ENCODE measurements at regions of chr21 and their contacts with region 1.

Region 1: GRCh38 chr21:46635324-46636172 is at the start of gene PRMT2:
- DNase-seq: peak; percentile 94 to 100 (median 98)
- ATAC-seq: peak; percentile 83
- H3K4me3 ChIP-seq: peak within 1 kb of the TSS; percentile 97
- H3K4me3 Mint-ChIP-seq: peak within 1 kb of the TSS; percentile 94
- H3K27ac ChIP-seq: peak within 1 kb of the TSS; percentile 95 to 97
- H3K27ac Mint-ChIP-seq: peak within 1 kb of the TSS; percentile 91
- H3K4me1 ChIP-seq: peaks cover 59% of the 10 kb centered on the region
- H3K4me1 Mint-ChIP-seq: peaks cover 80% of the 10 kb centered on the region
- H3K27me3 ChIP-seq: no peaks in the 10 kb centered on the region
- H3K27me3 Mint-ChIP-seq: no peaks in the 10 kb centered on the region
- CTCF ChIP-seq: no peak
- total RNA-seq, gene PRMT2: 78.8 to 78.9 TPM

Region 2: DNA sequence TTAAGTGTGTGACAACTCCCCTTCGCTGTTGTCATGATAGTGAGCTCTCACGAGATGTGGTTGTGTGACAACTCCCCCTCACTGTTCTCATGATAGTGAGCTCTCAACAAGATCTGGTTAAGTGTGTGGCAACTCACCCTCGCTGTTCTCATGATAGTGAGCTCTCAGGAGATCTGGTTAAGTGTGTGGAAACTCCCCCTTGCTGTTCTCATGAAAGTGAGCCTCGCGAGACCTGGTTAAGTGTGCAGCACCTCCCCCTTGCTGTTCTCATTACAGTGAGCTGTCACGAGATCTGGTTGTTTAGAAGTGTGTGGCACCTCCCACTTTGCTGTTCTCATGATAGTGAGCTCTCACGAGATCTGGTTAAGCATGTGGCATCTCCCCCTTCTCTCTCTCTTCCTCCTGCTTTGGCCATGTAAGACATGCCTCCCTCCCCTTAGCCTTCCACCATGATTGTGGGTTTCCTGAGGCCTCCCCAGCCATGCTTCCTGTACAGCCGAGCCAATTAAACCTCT is 381.9 kb before region 1 on chr21:
- CTCF ChIA-PET with region 1: no interaction called
- POLR2A ChIA-PET with region 1: no interaction called
- intact Hi-C with region 1: no loop called
- DNase-seq: peak in 6 of 9 experiments; percentile 9 to 84 (median 48)
- ATAC-seq: peak; percentile 92
- H3K4me3 ChIP-seq: no peak overlapping the region
- H3K4me3 Mint-ChIP-seq: no peak overlapping the region
- H3K27ac ChIP-seq: peak overlapping the region in 1 of 2 experiments; percentile 71
- H3K27ac Mint-ChIP-seq: peak overlapping the region; percentile 84
- H3K4me1 ChIP-seq: peaks cover 21% of the 10 kb centered on the region
- H3K4me1 Mint-ChIP-seq: peaks cover 35% of the 10 kb centered on the region
- H3K27me3 ChIP-seq: no peaks in the 10 kb centered on the region
- H3K27me3 Mint-ChIP-seq: no peaks in the 10 kb centered on the region
- CTCF ChIP-seq: no peak

Region 3: DNA sequence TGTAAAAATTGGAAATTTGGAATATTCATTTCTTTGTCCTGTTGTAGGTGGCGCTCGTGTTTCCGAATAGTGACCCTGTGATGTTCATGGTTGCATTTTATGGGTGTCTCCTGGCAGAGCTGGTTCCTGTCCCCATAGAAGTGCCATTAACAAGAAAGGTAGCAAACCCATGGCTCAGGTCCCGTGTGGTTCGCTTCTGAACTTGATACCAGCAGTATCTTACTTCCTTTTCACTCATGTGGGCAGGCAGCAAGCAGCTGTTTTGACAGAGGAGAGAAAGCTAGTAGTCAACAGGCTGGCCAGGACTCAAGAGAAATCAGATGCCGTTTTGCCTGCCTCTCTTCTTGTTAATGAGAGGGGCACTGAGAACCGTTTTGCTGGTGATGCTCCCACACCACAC is 103.5 kb before region 1 on chr21:
- CTCF ChIA-PET with region 1: interaction called, 7 read pairs
- POLR2A ChIA-PET with region 1: interaction called, 31 read pairs
- intact Hi-C with region 1: loop called in 1 of 2 experiments (anchors 1 kb)
- DNase-seq: peak in 6 of 9 experiments; percentile 42 to 77 (median 48)
- ATAC-seq: peak; percentile 86
- H3K4me3 ChIP-seq: peak overlapping the region in 1 of 2 experiments; percentile 18
- H3K4me3 Mint-ChIP-seq: peak overlapping the region; percentile 49
- H3K27ac ChIP-seq: peak overlapping the region; percentile 0 to 21
- H3K27ac Mint-ChIP-seq: peak overlapping the region; percentile 92
- H3K4me1 ChIP-seq: peaks cover 69% of the 10 kb centered on the region
- H3K4me1 Mint-ChIP-seq: peaks cover 41% of the 10 kb centered on the region
- H3K27me3 ChIP-seq: no peaks in the 10 kb centered on the region
- H3K27me3 Mint-ChIP-seq: no peaks in the 10 kb centered on the region
- CTCF ChIP-seq: no peak

Region 4: GRCh38 chr21:46551636-46552241 is 83.8 kb before region 1 on chr21:
- CTCF ChIA-PET with region 1: interaction called, 14 read pairs
- POLR2A ChIA-PET with region 1: interaction called, 115 read pairs
- intact Hi-C with region 1: no loop called
- DNase-seq: peak in 8 of 9 experiments; percentile 34 to 81 (median 55)
- ATAC-seq: peak; percentile 14
- H3K4me3 ChIP-seq: peak overlapping the region in 1 of 2 experiments; percentile 14
- H3K4me3 Mint-ChIP-seq: peak overlapping the region; percentile 66
- H3K27ac ChIP-seq: peak overlapping the region; percentile 59 to 84
- H3K27ac Mint-ChIP-seq: peak overlapping the region; percentile 99
- H3K4me1 ChIP-seq: peaks cover 84% of the 10 kb centered on the region
- H3K4me1 Mint-ChIP-seq: peaks cover 81% of the 10 kb centered on the region
- H3K27me3 ChIP-seq: no peaks in the 10 kb centered on the region
- H3K27me3 Mint-ChIP-seq: no peaks in the 10 kb centered on the region
- CTCF ChIP-seq: no peak

Region 5: DNA sequence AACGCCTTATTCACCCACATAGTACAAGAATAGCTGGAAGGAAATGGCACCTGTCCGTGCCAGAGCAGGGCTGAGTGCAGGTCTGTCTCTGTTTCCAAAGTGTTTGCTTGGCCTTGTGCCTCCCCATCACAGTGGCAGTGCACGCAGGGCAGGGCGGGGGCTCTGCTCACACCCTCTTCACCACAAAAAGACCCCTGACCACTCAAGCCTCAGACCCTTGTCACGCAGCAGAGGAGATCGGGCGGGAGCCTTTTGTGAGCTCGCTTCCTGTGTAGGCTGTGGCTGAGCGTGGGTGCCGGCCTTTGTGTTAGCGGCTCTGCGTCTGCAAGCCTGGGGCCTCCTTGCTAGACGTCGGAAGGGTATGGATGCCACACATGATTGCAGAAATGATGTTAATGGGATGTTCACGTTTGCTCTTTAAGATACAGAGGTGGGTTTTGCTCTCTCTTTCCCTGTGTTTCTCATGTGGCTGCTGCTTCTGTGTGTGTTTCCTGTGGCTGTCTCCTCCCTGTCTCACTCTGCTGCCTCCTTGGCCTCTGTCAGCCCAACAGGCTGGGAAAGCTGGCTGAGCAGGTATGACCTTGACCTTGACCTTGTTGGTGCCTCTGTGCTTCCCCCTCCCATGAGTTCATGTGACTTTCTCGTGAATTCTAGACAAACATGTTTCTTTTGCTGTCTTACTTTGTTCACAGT is 76.1 kb before region 1 on chr21:
- CTCF ChIA-PET with region 1: interaction called, 48 read pairs
- POLR2A ChIA-PET with region 1: interaction called, 115 read pairs
- intact Hi-C with region 1: loop called in 1 of 2 experiments (anchors 2 kb)
- DNase-seq: peak; percentile 31 to 88 (median 72)
- ATAC-seq: peak; percentile 77
- H3K4me3 ChIP-seq: peak overlapping the region; percentile 15 to 30
- H3K4me3 Mint-ChIP-seq: peak overlapping the region; percentile 73
- H3K27ac ChIP-seq: peak overlapping the region; percentile 67 to 75
- H3K27ac Mint-ChIP-seq: peak overlapping the region; percentile 97
- H3K4me1 ChIP-seq: peaks cover 95% of the 10 kb centered on the region
- H3K4me1 Mint-ChIP-seq: peaks cover 84% of the 10 kb centered on the region
- H3K27me3 ChIP-seq: no peaks in the 10 kb centered on the region
- H3K27me3 Mint-ChIP-seq: no peaks in the 10 kb centered on the region
- CTCF ChIP-seq: no peak

Region 6: DNA sequence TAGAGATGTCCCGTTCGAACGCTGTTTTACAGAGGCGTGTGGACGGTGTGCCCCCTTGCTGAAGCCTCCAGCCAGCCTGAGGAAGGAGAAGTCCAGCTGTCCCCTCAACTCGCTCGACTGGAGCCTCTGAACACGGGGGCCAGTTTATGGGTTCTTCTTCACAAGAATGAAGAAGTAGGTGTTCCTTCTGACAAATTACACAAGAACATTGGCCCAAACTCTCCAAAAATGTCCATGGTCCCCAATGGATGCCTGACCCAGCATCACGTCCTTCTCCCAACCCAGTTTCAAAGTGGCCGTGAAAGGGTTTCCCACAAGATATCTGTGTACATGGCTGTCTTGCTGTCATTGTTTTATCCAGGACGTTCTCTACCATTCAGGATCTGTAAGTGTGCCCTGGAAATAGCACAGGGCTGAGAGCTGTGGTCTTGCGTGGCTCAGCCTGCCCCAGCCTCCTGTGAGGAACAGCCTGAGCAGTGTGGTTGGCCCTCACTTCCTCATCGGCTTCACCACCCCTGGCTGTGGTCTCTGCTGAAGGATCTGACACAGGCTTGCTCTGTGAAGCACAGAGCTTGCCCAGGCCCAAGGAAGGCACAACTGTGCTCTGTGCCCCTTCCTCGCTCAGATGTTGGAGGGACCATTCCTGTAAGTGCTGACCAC is 29.7 kb before region 1 on chr21:
- CTCF ChIA-PET with region 1: interaction called, 4 read pairs
- POLR2A ChIA-PET with region 1: interaction called, 29 read pairs
- intact Hi-C with region 1: loop called in 1 of 2 experiments (anchors 2 kb)
- DNase-seq: peak; percentile 26 to 80 (median 61)
- ATAC-seq: peak; percentile 82
- H3K4me3 ChIP-seq: peak overlapping the region; percentile 12 to 21
- H3K4me3 Mint-ChIP-seq: peak overlapping the region; percentile 78
- H3K27ac ChIP-seq: peak overlapping the region in 1 of 2 experiments; percentile 61
- H3K27ac Mint-ChIP-seq: peak overlapping the region; percentile 88
- H3K4me1 ChIP-seq: peaks cover 43% of the 10 kb centered on the region
- H3K4me1 Mint-ChIP-seq: peaks cover 64% of the 10 kb centered on the region
- H3K27me3 ChIP-seq: no peaks in the 10 kb centered on the region
- H3K27me3 Mint-ChIP-seq: no peaks in the 10 kb centered on the region
- CTCF ChIP-seq: no peak

Region 7: DNA sequence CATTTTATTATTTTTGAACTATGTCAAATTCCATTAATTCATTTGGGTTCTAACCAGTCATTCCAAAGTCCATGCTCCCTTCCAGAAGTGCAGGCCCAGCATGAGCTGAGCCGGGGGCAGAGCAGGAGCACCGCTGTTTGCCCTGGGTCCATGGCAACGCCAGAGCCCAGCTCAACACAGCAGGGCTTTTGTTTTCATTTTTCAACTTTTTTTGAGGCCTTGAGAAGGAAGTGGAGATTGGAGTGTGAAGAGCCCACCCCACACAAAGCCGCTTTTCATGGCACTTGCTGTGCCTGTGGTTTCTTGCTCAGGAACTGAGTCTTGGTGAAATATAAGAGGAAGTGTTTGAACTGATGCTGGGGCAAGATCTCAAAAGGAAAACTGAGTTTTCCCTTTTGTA is 13.3 kb before region 1 on chr21:
- CTCF ChIA-PET with region 1: interaction called, 4 read pairs
- POLR2A ChIA-PET with region 1: interaction called, 41 read pairs
- intact Hi-C with region 1: loop called (anchors 1 kb)
- DNase-seq: peak; percentile 25 to 92 (median 61)
- ATAC-seq: peak; percentile 75
- H3K4me3 ChIP-seq: peak overlapping the region in 1 of 2 experiments; percentile 1
- H3K4me3 Mint-ChIP-seq: peak overlapping the region; percentile 40
- H3K27ac ChIP-seq: peak overlapping the region; percentile 72 to 75
- H3K27ac Mint-ChIP-seq: peak overlapping the region; percentile 88
- H3K4me1 ChIP-seq: peaks cover 77% of the 10 kb centered on the region
- H3K4me1 Mint-ChIP-seq: peaks cover 71% of the 10 kb centered on the region
- H3K27me3 ChIP-seq: no peaks in the 10 kb centered on the region
- H3K27me3 Mint-ChIP-seq: no peaks in the 10 kb centered on the region
- CTCF ChIP-seq: no peak

Measured in CD8-positive, alpha-beta T cell (primary cell).